Activated naive CD4-positive, alpha-beta T cell treated with anti-CD3 and anti-CD28 coated beads for 36 hours (primary cell): ENCODE measurements at regions of chr4 and their contacts with region 1.

Region 1: GRCh38 chr4:15457406-15458201 is 12.1 kb upstream of the CC2D2A start:
- DNase-seq: no peak
- H3K4me3 Mint-ChIP-seq: no peak overlapping the region
- H3K27ac Mint-ChIP-seq: no peak overlapping the region
- H3K4me1 Mint-ChIP-seq: peaks cover 6% of the 10 kb centered on the region
- H3K27me3 Mint-ChIP-seq: no peaks in the 10 kb centered on the region

Region 2: DNA sequence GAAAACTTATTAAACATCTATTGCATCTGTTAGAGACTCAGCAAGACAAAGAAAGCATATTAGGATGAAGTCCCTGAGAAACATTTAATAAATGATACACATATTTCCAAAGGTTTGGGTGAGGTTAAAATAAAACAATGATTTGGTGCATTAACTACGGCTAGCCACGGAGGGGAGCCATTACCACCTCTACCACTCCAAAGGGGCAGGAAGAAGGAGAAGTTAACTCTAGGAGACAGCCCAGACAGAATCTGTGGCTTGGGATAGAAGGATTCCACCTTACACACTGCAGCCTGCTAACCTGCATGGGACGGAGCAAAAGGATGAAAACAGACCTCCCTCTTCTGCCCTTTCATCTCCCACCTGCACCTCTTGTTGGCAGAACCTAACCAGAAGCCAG is 218.9 kb before region 1 on chr4:
- CTCF ChIA-PET with region 1: interaction called, 69 read pairs
- intact Hi-C with region 1: loop called (anchors 1 kb)
- DNase-seq: peak; percentile 66
- H3K4me3 Mint-ChIP-seq: no peak overlapping the region
- H3K27ac Mint-ChIP-seq: no peak overlapping the region
- H3K4me1 Mint-ChIP-seq: peaks cover 9% of the 10 kb centered on the region
- H3K27me3 Mint-ChIP-seq: no peaks in the 10 kb centered on the region

Region 3: GRCh38 chr4:15253201-15253748 is 204.3 kb before region 1 on chr4:
- CTCF ChIA-PET with region 1: interaction called, 16 read pairs
- intact Hi-C with region 1: no loop called
- DNase-seq: no peak
- H3K4me3 Mint-ChIP-seq: no peak overlapping the region
- H3K27ac Mint-ChIP-seq: no peak overlapping the region
- H3K4me1 Mint-ChIP-seq: no peaks in the 10 kb centered on the region
- H3K27me3 Mint-ChIP-seq: no peaks in the 10 kb centered on the region

Region 4: GRCh38 chr4:15428611-15429010 is 29.0 kb before region 1 on chr4:
- CTCF ChIA-PET with region 1: interaction called, 19 read pairs
- intact Hi-C with region 1: no loop called
- DNase-seq: no peak
- H3K4me3 Mint-ChIP-seq: no peak overlapping the region
- H3K27ac Mint-ChIP-seq: no peak overlapping the region
- H3K4me1 Mint-ChIP-seq: peaks cover 25% of the 10 kb centered on the region
- H3K27me3 Mint-ChIP-seq: no peaks in the 10 kb centered on the region

Region 5: DNA sequence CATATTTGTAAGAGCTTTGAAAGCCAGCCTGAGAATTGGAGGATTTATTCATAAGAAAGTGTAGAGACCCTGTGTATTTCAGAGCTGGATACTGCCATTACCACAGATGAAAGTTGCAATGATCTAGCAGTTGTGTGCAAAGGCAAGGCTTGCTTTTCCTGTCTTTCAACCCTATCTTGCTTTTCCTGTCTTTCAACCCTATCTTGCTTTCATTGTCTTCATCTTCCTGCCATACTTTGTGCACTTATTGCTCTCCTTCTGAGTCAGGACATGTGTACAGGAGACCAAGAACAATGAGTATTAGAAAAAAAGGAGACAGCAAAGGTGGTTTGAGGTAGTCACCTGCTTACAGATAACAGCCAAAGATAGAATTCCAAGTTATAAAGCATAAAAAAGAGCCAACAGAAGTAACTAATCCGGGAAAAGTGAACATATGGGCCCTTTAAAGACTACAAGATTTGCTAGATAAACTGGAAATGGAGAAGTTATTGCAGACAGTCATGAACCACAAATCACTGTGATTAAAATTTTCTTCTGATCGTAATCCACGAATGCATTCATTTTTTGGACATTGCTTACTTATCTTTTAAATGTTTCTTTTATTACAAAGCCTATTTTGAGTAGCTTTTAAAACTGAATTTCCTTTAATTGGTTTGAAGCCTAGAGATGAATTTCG is 12.6 kb before region 1 on chr4:
- CTCF ChIA-PET with region 1: interaction called, 16 read pairs
- intact Hi-C with region 1: no loop called
- DNase-seq: no peak
- H3K4me3 Mint-ChIP-seq: no peak overlapping the region
- H3K27ac Mint-ChIP-seq: no peak overlapping the region
- H3K4me1 Mint-ChIP-seq: peaks cover 8% of the 10 kb centered on the region
- H3K27me3 Mint-ChIP-seq: no peaks in the 10 kb centered on the region

Region 6: DNA sequence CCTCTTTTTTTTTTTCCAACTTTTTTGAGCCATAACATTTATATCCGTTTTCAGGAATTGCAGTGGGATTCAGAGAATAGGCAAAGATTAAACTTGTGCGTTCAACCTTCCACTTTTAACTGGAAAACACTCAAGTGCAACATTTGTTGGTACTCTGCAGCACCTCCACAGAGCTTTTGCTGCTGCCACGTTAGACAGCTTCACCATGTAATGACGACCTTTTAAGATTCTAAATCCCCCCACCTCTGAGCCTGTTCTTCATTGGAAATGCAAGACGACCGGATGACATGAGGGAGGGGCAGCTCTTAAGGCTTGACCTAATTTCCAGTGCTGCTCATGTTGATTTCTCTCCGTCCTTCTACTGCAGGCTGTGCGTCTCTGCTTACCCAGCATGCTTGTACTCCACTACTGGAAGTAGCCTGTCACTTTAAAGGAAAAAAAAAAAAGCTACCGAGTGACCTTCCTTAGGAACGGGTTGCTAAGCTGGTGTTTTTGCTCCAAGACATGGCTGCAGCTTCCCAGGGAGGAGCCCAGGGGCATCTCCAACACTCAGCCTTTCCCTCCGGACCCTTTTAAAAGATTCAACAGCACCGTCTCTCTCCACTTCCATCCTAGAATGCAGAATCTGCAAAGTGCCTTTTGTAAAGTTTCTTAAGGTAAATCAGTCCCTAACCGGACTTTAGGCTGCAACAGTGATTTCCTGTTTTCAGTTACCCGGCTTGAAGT is 12.0 kb after region 1 on chr4 and contains the start of gene CC2D2A:
- CTCF ChIA-PET with region 1: interaction called, 19 read pairs
- intact Hi-C with region 1: no loop called
- DNase-seq: no peak
- H3K4me3 Mint-ChIP-seq: peak within 1 kb of the TSS; percentile 33
- H3K27ac Mint-ChIP-seq: no peak within 1 kb of the TSS
- H3K4me1 Mint-ChIP-seq: peaks cover 7% of the 10 kb centered on the region
- H3K27me3 Mint-ChIP-seq: no peaks in the 10 kb centered on the region
- total RNA-seq, gene CC2D2A: not detected